Right ventricle myocardium inferior (tissue), 1 donor: ENCODE measurements at regions of chr2 and their contacts with region 1.

Region 1: GRCh38 chr2:99559075-99559662 is 69.4 kb upstream of the REV1 start:
- DNase-seq: peak; percentile 95
- ATAC-seq: peak; percentile 95

Region 2: GRCh38 chr2:99467390-99467789 is 91.8 kb before region 1 on chr2:
- intact Hi-C with region 1: no loop called
- DNase-seq: no peak
- ATAC-seq: no peak

Region 3: GRCh38 chr2:99624677-99625076 is 65.5 kb after region 1 on chr2:
- intact Hi-C with region 1: no loop called
- DNase-seq: no peak
- ATAC-seq: peak; percentile 67

Region 4: DNA sequence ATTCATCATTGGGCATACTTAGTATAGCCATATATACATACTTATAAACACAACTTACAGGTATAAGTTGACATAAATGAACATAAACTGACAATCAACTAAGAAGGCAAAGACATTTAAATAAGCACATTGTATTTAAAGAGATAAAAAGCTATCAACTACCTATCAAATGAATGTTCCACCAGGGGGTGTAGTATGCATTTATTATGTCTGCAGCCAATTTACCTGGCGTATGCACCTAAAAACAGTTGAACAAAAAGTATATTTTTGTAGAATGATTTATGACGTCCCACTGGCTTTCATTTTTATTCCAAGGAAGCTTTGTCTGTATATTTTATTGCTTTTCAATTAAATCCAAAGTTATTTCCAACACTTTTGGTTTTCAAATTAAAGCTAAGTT is 259.7 kb after region 1 on chr2:
- intact Hi-C with region 1: loop called (anchors 1 kb)
- DNase-seq: no peak
- ATAC-seq: no peak

Region 5: GRCh38 chr2:100126201-100126600 is 567.0 kb after region 1 on chr2:
- intact Hi-C with region 1: no loop called
- DNase-seq: no peak
- ATAC-seq: peak; percentile 52

Region 6: DNA sequence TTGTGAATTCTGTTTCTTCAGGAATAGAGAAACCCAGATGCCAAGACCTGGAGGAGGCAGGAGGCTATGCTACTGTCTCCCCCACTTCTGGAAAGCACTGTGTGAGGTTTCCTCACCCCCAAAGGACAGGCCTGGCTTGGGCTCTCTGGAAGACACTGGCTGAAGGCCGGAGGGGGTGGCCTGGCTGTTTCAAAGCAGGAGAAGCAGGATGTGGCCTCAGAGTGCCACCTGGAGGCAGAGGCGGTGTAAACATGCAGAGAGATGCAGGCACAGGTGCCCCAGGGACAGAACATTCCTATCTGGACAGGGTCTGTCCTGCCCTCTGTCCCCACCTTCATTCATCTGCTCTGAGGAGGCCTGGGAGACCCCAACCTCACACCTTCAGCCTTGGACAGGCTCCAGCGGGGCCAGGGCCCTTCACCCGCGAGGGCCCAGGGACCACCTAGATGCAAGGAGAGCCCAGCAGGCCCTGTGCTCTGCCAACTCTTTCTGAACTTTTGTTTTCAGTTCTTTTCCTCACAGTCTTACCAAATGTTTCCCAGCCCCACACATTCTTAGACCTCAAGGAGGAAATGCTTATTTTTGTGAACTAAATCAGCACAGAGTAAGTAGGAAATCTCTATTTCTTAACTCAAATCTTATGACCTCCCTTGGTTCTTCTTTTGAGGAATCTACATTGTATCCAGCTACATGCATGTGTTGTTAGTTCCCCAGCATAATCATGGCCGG is 683.9 kb after region 1 on chr2:
- intact Hi-C with region 1: loop called (anchors 2 kb)
- DNase-seq: peak; percentile 84
- ATAC-seq: peak; percentile 83

Region 7: DNA sequence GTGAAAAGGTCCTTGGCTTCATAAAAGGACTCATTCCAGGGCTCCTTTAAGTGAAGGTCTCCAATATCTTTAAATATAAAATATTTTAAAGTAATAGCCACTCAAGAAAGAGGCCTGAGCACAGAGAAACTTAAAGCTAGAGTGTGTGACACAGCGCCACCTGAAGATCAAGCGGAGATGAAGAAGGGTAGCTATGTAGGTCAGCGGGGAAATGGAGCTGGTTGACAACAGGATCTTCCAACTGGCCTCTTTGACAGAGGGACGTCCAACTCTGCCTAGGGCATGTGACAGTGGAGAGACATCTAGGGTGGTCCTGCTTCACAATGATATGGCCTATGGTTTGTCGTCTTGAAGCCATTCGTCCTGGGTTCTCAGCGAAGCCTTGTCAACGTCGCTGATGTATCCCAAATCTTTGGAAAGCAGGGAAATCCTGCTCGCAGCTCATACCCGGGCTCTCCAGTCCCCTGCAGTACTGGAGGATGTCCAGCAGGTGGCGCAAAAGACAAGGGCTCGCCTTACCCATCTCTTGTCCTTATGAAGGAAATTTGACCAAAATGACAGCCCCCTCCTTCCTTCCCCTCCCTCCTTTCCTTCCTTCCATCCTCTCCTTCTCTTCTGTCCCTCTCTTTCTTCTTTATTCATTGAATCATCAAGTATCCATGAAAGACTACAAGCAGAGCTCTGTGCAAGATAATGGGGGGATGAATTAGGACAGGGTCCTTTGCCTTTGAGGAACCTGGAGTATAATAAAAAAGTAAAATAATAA is 703.6 kb after region 1 on chr2:
- intact Hi-C with region 1: loop called (anchors 5 kb)
- DNase-seq: peak; percentile 84
- ATAC-seq: peak; percentile 78

Region 8: GRCh38 chr2:100381240-100381639 is 822.1 kb after region 1 on chr2:
- intact Hi-C with region 1: loop called (anchors 10 kb)
- DNase-seq: no peak
- ATAC-seq: peak; percentile 72